CD8-positive, alpha-beta T cell (primary cell): ENCODE measurements at regions of chr17 and their contacts with region 1.

Region 1: GRCh38 chr17:64653325-64653984 is 8.7 kb downstream of the SMURF2 start:
- DNase-seq: no peak
- ATAC-seq: no peak
- H3K4me3 ChIP-seq: no peak overlapping the region
- H3K4me3 Mint-ChIP-seq: no peak overlapping the region
- H3K27ac ChIP-seq: no peak overlapping the region
- H3K27ac Mint-ChIP-seq: peak overlapping the region; percentile 25
- H3K4me1 ChIP-seq: peaks cover 16% of the 10 kb centered on the region
- H3K4me1 Mint-ChIP-seq: peaks cover 63% of the 10 kb centered on the region
- H3K27me3 ChIP-seq: no peaks in the 10 kb centered on the region
- H3K27me3 Mint-ChIP-seq: no peaks in the 10 kb centered on the region
- CTCF ChIP-seq: no peak

Region 2: GRCh38 chr17:64326395-64327054 is 326.9 kb before region 1 on chr17:
- CTCF ChIA-PET with region 1: no interaction called
- POLR2A ChIA-PET with region 1: no interaction called
- intact Hi-C with region 1: no loop called
- DNase-seq: peak in 1 of 9 experiments; percentile 55
- ATAC-seq: no peak
- H3K4me3 ChIP-seq: no peak overlapping the region
- H3K4me3 Mint-ChIP-seq: peak overlapping the region; percentile 19
- H3K27ac ChIP-seq: peak overlapping the region in 1 of 2 experiments; percentile 24
- H3K27ac Mint-ChIP-seq: no peak overlapping the region
- H3K4me1 ChIP-seq: peaks cover 28% of the 10 kb centered on the region
- H3K4me1 Mint-ChIP-seq: peaks cover 32% of the 10 kb centered on the region
- H3K27me3 ChIP-seq: no peaks in the 10 kb centered on the region
- H3K27me3 Mint-ChIP-seq: no peaks in the 10 kb centered on the region
- CTCF ChIP-seq: no peak

Region 3: GRCh38 chr17:64638552-64639203 is 14.8 kb before region 1 on chr17:
- CTCF ChIA-PET with region 1: interaction called, 13 read pairs
- POLR2A ChIA-PET with region 1: no interaction called
- intact Hi-C with region 1: no loop called
- DNase-seq: no peak
- ATAC-seq: no peak
- H3K4me3 ChIP-seq: no peak overlapping the region
- H3K4me3 Mint-ChIP-seq: no peak overlapping the region
- H3K27ac ChIP-seq: no peak overlapping the region
- H3K27ac Mint-ChIP-seq: peak overlapping the region; percentile 10
- H3K4me1 ChIP-seq: peaks cover 13% of the 10 kb centered on the region
- H3K4me1 Mint-ChIP-seq: peaks cover 53% of the 10 kb centered on the region
- H3K27me3 ChIP-seq: no peaks in the 10 kb centered on the region
- H3K27me3 Mint-ChIP-seq: no peaks in the 10 kb centered on the region
- CTCF ChIP-seq: no peak